Testis (tissue), 5 donors: ENCODE measurements at regions of chr14 and their contacts with region 1.

Region 1: DNA sequence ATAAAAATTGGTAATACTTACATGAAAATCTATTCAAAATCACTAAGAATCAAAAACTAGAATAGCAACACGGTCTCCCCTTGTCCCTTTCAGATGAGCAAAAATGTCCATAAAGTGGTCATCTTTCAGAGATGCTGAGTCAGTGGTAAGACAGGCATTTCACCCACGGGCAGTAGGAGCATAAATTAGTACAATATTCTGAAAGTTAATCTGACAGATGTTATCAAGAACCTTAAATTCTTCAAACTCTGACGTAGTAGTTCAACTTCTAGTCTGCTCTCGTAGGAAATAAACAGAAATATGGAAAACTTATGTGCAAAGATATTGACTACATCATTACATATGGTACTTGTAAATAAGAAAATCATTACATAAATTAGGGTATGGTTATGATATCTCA is 33.1 kb upstream of the GNPNAT1 start:
- DNase-seq: no peak
- H3K4me3 ChIP-seq: no peak overlapping the region
- H3K27ac ChIP-seq: no peak overlapping the region
- H3K4me1 ChIP-seq: no peaks in the 10 kb centered on the region
- H3K27me3 ChIP-seq: no peaks in the 10 kb centered on the region
- CTCF ChIP-seq: no peak
- POLR2A ChIP-seq: no peak

Region 2: GRCh38 chr14:52724360-52724644 is 100.2 kb before region 1 on chr14:
- intact Hi-C with region 1: no loop called
- DNase-seq: no peak
- H3K4me3 ChIP-seq: no peak overlapping the region
- H3K27ac ChIP-seq: no peak overlapping the region
- H3K4me1 ChIP-seq: no peaks in the 10 kb centered on the region
- H3K27me3 ChIP-seq: no peaks in the 10 kb centered on the region
- CTCF ChIP-seq: no peak
- POLR2A ChIP-seq: no peak

Region 3: DNA sequence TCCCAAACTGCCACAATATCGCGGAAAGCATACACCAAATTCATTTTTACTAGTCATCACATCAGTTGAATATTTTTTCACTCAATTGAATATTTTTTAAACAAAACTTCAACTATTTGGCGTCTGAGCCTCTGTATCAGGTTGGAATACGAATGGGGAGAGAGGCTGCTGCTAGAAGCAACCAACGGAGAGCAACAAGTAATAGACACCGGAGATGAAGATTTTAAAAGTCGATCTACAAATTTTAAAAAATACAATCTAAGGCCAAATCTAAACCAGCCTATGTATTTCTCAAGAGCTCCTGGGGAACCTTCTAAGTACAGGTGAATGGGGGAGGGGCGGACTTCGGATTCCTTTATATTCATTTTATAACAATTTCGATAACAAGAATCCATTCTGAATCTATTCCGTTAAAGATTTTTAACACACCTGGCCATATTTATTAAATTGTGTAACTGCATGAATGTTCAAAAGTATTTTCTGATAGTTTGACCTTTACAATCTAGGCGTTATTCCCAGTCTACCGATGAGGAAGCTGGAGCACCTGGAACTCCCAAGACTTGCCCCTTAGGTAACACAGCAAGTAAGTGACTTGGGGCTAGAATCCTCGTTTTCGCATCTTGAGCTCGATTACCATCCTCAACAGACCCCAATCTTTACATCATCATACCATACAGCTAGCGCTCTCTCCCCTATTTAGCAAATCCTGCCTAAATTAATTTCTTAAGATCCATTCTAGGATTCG is 34.3 kb before region 1 on chr14:
- intact Hi-C with region 1: no loop called
- DNase-seq: no peak
- H3K4me3 ChIP-seq: peak overlapping the region; percentile 76 to 79
- H3K27ac ChIP-seq: peak overlapping the region; percentile 81 to 90
- H3K4me1 ChIP-seq: peaks cover 11% of the 10 kb centered on the region
- H3K27me3 ChIP-seq: no peaks in the 10 kb centered on the region
- CTCF ChIP-seq: no peak
- POLR2A ChIP-seq: no peak

Region 4: DNA sequence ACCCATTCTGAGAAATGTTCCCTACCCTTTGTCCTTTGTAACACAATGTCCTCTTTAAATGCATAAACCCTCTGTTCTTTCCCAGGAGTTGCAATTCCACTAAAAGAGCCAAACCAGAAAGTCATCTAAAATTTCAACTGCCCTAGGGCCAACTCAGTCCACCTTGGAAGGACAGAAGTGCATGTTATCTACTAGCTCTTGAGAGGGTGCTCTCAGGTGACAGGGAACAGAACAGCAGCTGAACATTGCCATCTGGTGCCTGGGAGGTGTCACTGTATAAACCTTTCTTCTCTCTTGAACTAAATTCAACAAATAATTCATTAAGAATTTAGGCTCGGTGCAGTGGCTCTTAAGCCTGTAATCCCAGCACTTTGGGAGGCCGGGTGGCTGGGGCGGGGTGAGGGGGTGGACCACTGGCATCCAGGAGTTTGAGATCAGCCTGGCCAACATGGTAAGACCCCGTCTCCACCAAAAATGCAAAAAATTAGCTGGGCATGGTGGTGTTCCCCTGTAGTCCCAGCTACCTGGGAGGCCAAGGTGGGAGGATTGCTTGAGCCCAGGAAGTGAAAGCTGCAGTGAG is 136.6 kb after region 1 on chr14:
- intact Hi-C with region 1: loop called (anchors 5 kb)
- DNase-seq: peak; percentile 62
- H3K4me3 ChIP-seq: no peak overlapping the region
- H3K27ac ChIP-seq: no peak overlapping the region
- H3K4me1 ChIP-seq: peaks cover 3% of the 10 kb centered on the region
- H3K27me3 ChIP-seq: no peaks in the 10 kb centered on the region
- CTCF ChIP-seq: peak; percentile 41 to 64 (median 49)
- POLR2A ChIP-seq: no peak